ENCODE measurements at regions of chr22 and their contacts with region 1.

Region 1: GRCh38 chr22:50301581-50302541 is 5.6 kb downstream of the PLXNB2 start:
- DNase-seq: no peak
- ATAC-seq: peak; percentile 9
- H3K4me3 Mint-ChIP-seq: peak overlapping the region; percentile 60
- H3K27ac Mint-ChIP-seq: no peak overlapping the region
- H3K4me1 Mint-ChIP-seq: peaks cover 63% of the 10 kb centered on the region
- H3K27me3 Mint-ChIP-seq: peaks cover 2% of the 10 kb centered on the region
- CTCF ChIP-seq: no peak

Region 2: DNA sequence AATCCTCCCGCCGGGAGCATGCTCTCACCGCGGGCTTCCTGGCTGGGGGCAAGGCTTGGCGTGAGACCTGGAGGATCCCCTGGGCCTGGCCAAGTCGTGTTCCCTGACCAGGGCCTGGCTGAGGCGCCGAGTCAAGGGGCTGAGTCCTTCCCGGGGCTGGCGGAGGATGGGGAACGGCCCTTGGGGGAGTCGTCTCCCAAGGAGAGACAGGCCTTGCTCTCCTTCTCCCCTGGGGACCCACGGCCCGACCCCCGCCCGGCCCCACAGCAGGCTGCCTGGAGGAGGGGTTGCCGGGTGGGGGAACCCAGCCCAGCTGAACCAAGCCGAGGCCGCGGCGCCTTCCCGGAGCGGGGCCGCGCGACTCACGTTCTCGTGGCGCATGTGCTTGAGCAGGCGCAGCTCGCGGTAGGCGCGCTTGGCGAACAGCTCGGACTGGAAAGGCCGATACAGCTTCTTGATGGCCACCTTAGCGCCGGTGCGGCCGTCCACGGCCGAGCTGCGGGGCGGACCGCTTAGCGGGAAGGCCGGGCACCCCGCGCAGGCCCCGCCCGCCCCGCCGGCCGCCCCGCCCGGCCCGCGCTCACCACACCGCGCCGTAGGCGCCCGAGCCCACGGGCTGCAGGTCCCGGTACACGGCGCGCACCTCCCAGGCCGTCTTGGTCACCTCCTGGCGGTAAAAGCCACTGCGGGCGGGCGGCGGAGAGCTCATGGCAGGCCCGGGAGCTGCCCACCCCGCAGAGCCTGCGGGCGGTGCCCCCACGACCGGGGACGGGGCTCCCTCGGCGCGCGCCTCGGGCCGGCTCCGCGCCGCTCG is 40.9 kb before region 1 on chr22:
- CTCF ChIA-PET with region 1: no interaction called
- POLR2A ChIA-PET with region 1: no interaction called
- intact Hi-C with region 1: no loop called
- DNase-seq: no peak
- ATAC-seq: peak; percentile 35
- H3K4me3 Mint-ChIP-seq: peak overlapping the region; percentile 15
- H3K27ac Mint-ChIP-seq: no peak overlapping the region
- H3K4me1 Mint-ChIP-seq: peaks cover 18% of the 10 kb centered on the region
- H3K27me3 Mint-ChIP-seq: peaks cover 13% of the 10 kb centered on the region
- CTCF ChIP-seq: no peak

Region 3: DNA sequence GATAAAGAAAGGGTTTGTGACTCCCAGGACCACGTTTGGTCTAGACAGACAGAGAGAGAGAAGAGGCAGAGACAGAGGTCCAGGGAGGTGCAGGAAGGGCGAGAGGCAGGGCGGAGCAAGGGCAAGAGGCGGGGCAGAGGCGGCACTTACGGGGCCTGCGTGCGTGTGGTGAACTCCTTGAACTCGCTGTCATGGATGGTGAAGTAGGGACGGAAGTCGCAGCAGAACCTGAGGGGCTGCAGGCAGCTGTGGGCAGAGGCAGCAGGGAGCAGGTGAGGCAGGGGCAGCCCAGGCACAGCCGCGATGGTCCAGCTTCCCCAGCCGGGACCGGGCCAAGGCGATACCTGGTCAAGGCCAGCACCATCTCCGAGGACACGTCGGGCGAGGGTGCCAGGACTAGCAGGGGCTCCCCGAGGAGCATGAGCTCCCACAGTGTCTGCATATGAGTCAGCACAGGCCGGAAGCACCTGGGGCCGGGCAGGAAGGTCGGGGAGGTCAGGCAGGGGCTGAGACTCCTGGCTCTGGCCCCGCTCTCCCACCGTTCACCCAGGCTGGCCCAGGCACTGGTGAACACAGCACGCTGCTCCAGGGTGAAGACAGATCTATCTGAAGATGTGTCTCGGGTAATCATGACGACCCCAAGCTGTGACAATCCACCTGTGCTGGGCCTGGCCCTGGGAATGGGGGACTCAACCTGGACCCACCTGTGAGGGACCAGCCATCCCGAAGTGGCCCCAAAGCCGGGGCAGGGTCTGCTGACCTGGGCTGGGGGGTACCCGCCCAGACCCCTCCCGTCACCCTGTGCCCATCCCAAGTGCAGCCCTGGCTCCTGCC is 12.8 kb after region 1 on chr22:
- CTCF ChIA-PET with region 1: no interaction called
- POLR2A ChIA-PET with region 1: interaction called, 21 read pairs
- intact Hi-C with region 1: loop called (anchors 1 kb)
- DNase-seq: peak; percentile 76
- ATAC-seq: peak; percentile 90
- H3K4me3 Mint-ChIP-seq: peak overlapping the region; percentile 77
- H3K27ac Mint-ChIP-seq: peak overlapping the region; percentile 86
- H3K4me1 Mint-ChIP-seq: peaks cover 52% of the 10 kb centered on the region
- H3K27me3 Mint-ChIP-seq: no peaks in the 10 kb centered on the region
- CTCF ChIP-seq: no peak